ENCODE measurements at regions of chr1 and their contacts with region 1.

Region 1: DNA sequence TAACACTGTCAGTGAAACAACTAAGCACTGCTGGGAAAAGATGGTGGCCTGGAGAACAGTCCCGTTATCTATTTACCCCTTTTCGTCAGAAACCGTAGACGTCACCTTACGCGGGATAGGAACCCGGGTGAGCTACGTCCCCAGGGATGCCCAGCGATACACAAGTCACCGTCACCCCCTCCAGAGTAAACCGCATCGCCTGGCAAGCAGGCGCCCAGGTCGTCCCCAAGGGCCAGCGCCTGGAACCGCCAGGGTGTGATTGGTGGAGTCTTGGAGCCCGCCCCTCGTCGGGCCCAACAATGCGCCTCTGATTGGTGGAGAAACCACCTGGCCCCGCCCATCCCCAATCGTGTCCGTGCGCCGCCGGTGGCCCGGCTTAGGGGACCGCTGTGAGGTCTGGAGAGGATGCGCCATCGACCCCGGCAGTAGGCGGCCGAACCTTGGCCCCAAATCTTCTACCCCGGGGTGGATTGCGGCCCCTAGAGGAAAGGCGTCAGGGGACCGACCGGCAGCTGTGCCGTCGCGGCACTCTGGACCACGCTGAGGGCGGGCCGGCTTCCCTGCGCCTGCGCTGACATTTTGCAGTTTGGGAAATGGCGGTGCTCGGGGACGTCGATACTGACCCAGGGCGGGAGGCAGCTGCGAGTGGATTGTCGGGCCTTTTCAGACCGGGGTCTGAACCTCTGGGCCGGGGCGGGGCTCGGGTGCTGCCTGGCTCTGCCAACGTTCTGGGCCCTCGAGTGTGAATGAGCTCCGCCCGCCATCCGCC is 34.4 kb downstream of the SLC2A1 start:
- DNase-seq: peak; percentile 89 to 94 (median 90)
- H3K4me3 ChIP-seq: peak overlapping the region; percentile 83 to 85
- H3K4me3 Mint-ChIP-seq: peak overlapping the region; percentile 82 to 97 (median 94)
- H3K27ac ChIP-seq: peak overlapping the region; percentile 72
- H3K27ac Mint-ChIP-seq: peak overlapping the region; percentile 89 to 98 (median 95)
- H3K4me1 ChIP-seq: peaks cover 19% of the 10 kb centered on the region
- H3K4me1 Mint-ChIP-seq: peaks cover 27 to 45% (median 35%) of the 10 kb centered on the region in 4 donors
- H3K27me3 ChIP-seq: no peaks in the 10 kb centered on the region
- H3K27me3 Mint-ChIP-seq: no peaks in the 10 kb centered on the region

Region 2: GRCh38 chr1:42681741-42682483 is 242.4 kb before region 1 on chr1 and contains the start of gene YBX1:
- CTCF ChIA-PET with region 1: interaction called, 3 read pairs
- POLR2A ChIA-PET with region 1: no interaction called
- intact Hi-C with region 1: loop called (anchors 1 kb)
- DNase-seq: peak; percentile 97 to 98 (median 97)
- H3K4me3 ChIP-seq: peak within 1 kb of the TSS; percentile 77 to 90
- H3K4me3 Mint-ChIP-seq: peak within 1 kb of the TSS; percentile 96 to 100 (median 98)
- H3K27ac ChIP-seq: peak within 1 kb of the TSS; percentile 78
- H3K27ac Mint-ChIP-seq: peak within 1 kb of the TSS; percentile 96 to 99 (median 99)
- H3K4me1 ChIP-seq: peaks cover 49% of the 10 kb centered on the region
- H3K4me1 Mint-ChIP-seq: peaks cover 43 to 61% (median 52%) of the 10 kb centered on the region in 4 donors
- H3K27me3 ChIP-seq: no peaks in the 10 kb centered on the region
- H3K27me3 Mint-ChIP-seq: no peaks in the 10 kb centered on the region
- total RNA-seq, gene YBX1: 328 TPM

Region 3: DNA sequence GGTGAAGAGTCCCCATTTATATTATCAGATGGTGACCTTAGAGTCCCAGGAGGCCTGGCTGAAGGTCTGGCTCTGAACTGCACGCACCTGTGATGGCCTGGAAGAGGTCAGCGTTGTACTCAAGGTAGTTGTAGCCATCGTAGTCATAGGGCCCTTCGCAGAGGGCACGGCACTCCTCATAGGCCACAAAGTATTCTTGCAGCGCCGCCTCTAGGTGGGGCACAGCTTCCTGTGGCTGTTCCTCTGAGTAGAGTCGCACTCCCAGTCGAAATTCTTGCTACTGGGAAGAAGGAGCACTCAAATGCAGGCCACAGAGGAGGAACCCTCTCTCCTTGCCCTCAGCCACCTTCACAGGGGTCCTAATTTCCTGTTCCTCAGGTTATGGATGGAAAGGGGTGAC is 165.2 kb before region 1 on chr1:
- CTCF ChIA-PET with region 1: no interaction called
- POLR2A ChIA-PET with region 1: no interaction called
- intact Hi-C with region 1: no loop called
- DNase-seq: no peak
- H3K4me3 ChIP-seq: no peak overlapping the region
- H3K4me3 Mint-ChIP-seq: no peak overlapping the region
- H3K27ac ChIP-seq: no peak overlapping the region
- H3K27ac Mint-ChIP-seq: peak overlapping the region in 3 of 7 donors; percentile 22 to 53 (median 41)
- H3K4me1 ChIP-seq: no peaks in the 10 kb centered on the region
- H3K4me1 Mint-ChIP-seq: peaks cover 0 to 7% (median under 1%) of the 10 kb centered on the region in 4 donors
- H3K27me3 ChIP-seq: no peaks in the 10 kb centered on the region
- H3K27me3 Mint-ChIP-seq: no peaks in the 10 kb centered on the region

Region 4: GRCh38 chr1:42816585-42817434 is 107.5 kb before region 1 on chr1 and contains the starts of genes ERMAP and SVBP:
- CTCF ChIA-PET with region 1: no interaction called
- POLR2A ChIA-PET with region 1: interaction called, 4 read pairs
- intact Hi-C with region 1: loop called (anchors 5 kb)
- DNase-seq: peak; percentile 88 to 97 (median 92)
- H3K4me3 ChIP-seq: peak within 1 kb of the TSS; percentile 43 to 74
- H3K4me3 Mint-ChIP-seq: peak within 1 kb of the TSS; percentile 82 to 93 (median 86)
- H3K27ac ChIP-seq: peak within 1 kb of the TSS; percentile 87
- H3K27ac Mint-ChIP-seq: peak within 1 kb of the TSS; percentile 86 to 96 (median 94)
- H3K4me1 ChIP-seq: peaks cover 17% of the 10 kb centered on the region
- H3K4me1 Mint-ChIP-seq: peaks cover 19 to 32% (median 27%) of the 10 kb centered on the region in 4 donors
- H3K27me3 ChIP-seq: no peaks in the 10 kb centered on the region
- H3K27me3 Mint-ChIP-seq: no peaks in the 10 kb centered on the region
- total RNA-seq, gene ERMAP: 6.5 to 8.6 TPM
- total RNA-seq, gene SVBP: 20.4 to 23.5 TPM

Region 5: DNA sequence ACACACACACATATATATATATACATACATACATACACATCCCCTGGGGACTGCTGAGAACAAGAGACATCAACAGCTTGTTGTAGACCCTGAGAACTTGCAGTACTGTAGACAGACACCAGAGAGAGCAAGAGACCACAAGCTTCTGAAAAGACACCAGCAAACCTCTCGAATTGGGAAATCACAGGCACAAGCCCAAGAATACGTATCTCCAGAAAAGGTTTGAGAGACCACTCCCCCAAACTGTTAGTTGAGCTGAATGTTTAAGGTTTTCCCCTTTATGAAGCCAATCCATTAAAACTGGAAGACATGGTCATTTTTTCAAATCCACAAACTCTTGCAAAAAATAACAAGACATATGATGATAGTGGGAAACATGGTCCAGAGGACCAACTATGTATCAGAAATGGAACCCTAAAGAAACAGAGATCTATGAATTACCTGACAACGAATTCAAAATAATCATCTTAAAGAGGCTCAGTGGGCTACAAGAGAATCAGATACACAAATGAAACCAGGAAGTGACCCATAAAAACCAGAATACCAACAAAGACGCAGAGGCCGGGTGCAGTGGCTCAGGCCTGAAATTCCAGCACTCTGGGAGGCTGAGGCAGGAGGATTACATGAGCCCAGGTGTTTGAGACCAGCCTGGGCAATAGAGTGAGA is 10.7 kb before region 1 on chr1:
- CTCF ChIA-PET with region 1: interaction called, 69 read pairs
- POLR2A ChIA-PET with region 1: interaction called, 8 read pairs
- intact Hi-C with region 1: loop called (anchors 1 kb)
- DNase-seq: peak; percentile 70 to 84 (median 78)
- H3K4me3 ChIP-seq: no peak overlapping the region
- H3K4me3 Mint-ChIP-seq: no peak overlapping the region
- H3K27ac ChIP-seq: no peak overlapping the region
- H3K27ac Mint-ChIP-seq: no peak overlapping the region
- H3K4me1 ChIP-seq: no peaks in the 10 kb centered on the region
- H3K4me1 Mint-ChIP-seq: peaks cover 0 to 5% (median 2%) of the 10 kb centered on the region in 4 donors
- H3K27me3 ChIP-seq: no peaks in the 10 kb centered on the region
- H3K27me3 Mint-ChIP-seq: peaks cover 2 to 4% of the 10 kb centered on the region in 2 donors

Region 6: DNA sequence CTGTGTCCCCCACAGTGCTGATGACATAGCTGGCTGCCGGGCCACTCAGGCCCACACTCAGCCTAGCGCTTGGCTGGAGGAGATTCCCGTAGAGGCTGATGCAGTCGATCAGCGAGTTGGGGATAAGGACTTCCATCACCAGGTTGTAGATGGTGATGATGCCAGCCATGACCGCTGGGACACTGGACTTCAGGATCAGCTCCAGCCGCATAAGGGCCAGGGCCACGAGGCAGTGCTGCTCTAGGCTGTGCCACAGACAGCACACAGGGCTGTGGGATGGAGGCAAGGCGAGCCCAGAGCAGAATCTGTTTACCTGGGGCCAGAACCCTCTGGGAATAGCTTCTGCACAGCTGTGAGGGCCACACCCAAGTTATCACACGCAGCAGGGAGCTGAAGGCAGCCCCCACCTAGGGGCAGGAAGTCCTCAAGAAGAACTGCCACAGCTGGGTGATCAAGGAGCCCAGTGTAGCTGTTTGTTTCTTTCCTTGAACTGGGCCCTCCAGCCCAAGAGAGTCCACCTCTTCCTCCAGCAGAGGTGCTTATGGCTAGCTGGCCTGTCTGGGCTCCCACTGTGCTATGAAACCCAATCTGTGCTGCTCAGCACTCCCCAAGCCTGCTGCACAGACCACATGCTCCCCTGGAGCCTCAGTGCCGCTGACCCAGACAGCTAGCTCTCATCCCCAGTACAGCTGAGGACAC is 28.2 kb after region 1 on chr1:
- CTCF ChIA-PET with region 1: interaction called, 42 read pairs
- POLR2A ChIA-PET with region 1: interaction called, 102 read pairs
- intact Hi-C with region 1: no loop called
- DNase-seq: peak in 3 of 5 donors; percentile 32 to 47 (median 37)
- H3K4me3 ChIP-seq: peak overlapping the region; percentile 1 to 38
- H3K4me3 Mint-ChIP-seq: peak overlapping the region; percentile 36 to 72 (median 62)
- H3K27ac ChIP-seq: peak overlapping the region; percentile 50
- H3K27ac Mint-ChIP-seq: peak overlapping the region; percentile 52 to 97 (median 70)
- H3K4me1 ChIP-seq: peaks cover 93% of the 10 kb centered on the region
- H3K4me1 Mint-ChIP-seq: peaks cover 60 to 94% (median 83%) of the 10 kb centered on the region in 4 donors
- H3K27me3 ChIP-seq: no peaks in the 10 kb centered on the region
- H3K27me3 Mint-ChIP-seq: no peaks in the 10 kb centered on the region

Region 7: GRCh38 chr1:43041593-43041992 is 117.3 kb after region 1 on chr1:
- CTCF ChIA-PET with region 1: interaction called, 5 read pairs
- POLR2A ChIA-PET with region 1: interaction called, 3 read pairs
- intact Hi-C with region 1: loop called (anchors 1 kb)
- DNase-seq: no peak
- H3K4me3 ChIP-seq: no peak overlapping the region
- H3K4me3 Mint-ChIP-seq: no peak overlapping the region
- H3K27ac ChIP-seq: no peak overlapping the region
- H3K27ac Mint-ChIP-seq: no peak overlapping the region
- H3K4me1 ChIP-seq: no peaks in the 10 kb centered on the region
- H3K4me1 Mint-ChIP-seq: peaks cover 6 to 9% (median 6%) of the 10 kb centered on the region in 4 donors
- H3K27me3 ChIP-seq: no peaks in the 10 kb centered on the region
- H3K27me3 Mint-ChIP-seq: no peaks in the 10 kb centered on the region

Region 8: GRCh38 chr1:43171876-43172526 is 247.7 kb after region 1 on chr1 and contains the starts of genes CFAP57 and EBNA1BP2:
- CTCF ChIA-PET with region 1: no interaction called
- POLR2A ChIA-PET with region 1: no interaction called
- intact Hi-C with region 1: loop called (anchors 1 kb)
- DNase-seq: peak; percentile 93 to 95 (median 94)
- H3K4me3 ChIP-seq: peak within 1 kb of the TSS; percentile 81 to 87
- H3K4me3 Mint-ChIP-seq: peak within 1 kb of the TSS; percentile 94 to 100 (median 99)
- H3K27ac ChIP-seq: peak within 1 kb of the TSS; percentile 62
- H3K27ac Mint-ChIP-seq: peak within 1 kb of the TSS; percentile 84 to 99 (median 96)
- H3K4me1 ChIP-seq: peaks cover 21% of the 10 kb centered on the region
- H3K4me1 Mint-ChIP-seq: peaks cover 22 to 31% (median 26%) of the 10 kb centered on the region in 4 donors
- H3K27me3 ChIP-seq: peaks cover 10% of the 10 kb centered on the region
- H3K27me3 Mint-ChIP-seq: peaks cover 13 to 15% of the 10 kb centered on the region in 2 donors
- total RNA-seq, gene CFAP57: not detected
- total RNA-seq, gene EBNA1BP2: 23.6 to 27.6 TPM

Measured in CD4-positive, alpha-beta memory T cell (primary cell).